Heart right ventricle (tissue), 16 donors: ENCODE measurements at regions of chr6 and their contacts with region 1.

Region 1: DNA sequence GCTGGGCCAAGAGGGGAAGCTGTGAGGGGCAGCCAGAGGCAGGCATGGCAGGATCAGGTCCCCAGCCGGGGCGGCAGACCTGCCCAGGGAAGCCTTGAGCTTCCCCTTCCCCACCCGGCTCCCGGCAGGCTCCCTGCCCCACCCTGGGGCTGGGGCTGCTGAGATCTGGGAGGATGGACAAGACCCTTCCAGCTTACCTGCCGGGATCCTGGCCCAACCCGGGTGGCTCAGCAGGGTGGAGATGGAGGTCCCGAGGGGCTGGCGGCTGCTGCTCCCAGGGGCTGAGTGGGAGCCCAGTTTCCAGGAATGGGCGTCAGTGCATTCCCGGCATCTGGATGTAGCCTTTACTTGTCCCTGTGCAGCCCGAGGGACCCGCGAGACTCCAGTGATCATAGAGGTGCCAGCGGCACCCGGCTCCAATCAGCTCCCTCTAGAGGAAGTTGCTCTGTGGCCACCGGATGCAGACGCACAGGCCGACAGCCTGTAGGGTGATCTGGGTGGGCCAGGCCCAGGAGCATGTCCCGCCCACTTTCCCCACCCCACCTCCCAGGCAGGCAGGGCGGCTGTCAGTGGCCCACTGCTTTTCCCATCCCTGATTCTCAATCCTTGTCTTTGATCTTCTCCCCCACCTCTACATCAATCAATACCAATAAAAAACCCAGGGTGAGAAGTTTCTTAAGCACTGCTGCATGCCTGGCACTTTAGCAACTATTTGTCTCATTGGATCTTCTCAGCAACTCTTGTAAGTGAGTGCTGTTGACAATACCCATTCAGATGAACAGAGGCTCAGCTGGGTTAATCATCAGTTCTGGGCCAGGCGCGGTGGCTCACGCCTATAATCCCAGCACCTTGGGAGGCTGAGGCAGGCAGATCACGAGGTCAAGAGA is at the start of gene BAK1:
- DNase-seq: peak; percentile 90 to 92
- ATAC-seq: peak; percentile 92 to 97 (median 95)
- H3K4me3 ChIP-seq: peak within 1 kb of the TSS; percentile 50 to 95 (median 90)
- H3K27ac ChIP-seq: peak within 1 kb of the TSS; percentile 54 to 94 (median 90)
- H3K4me1 ChIP-seq: peaks cover 18 to 39% (median 33%) of the 10 kb centered on the region in 9 donors
- H3K27me3 ChIP-seq: no peaks in the 10 kb centered on the region
- CTCF ChIP-seq: peak; percentile 30 to 75 (median 61)
- total RNA-seq, gene BAK1: 16.0 to 26.4 (median 18.7) TPM

Region 2: DNA sequence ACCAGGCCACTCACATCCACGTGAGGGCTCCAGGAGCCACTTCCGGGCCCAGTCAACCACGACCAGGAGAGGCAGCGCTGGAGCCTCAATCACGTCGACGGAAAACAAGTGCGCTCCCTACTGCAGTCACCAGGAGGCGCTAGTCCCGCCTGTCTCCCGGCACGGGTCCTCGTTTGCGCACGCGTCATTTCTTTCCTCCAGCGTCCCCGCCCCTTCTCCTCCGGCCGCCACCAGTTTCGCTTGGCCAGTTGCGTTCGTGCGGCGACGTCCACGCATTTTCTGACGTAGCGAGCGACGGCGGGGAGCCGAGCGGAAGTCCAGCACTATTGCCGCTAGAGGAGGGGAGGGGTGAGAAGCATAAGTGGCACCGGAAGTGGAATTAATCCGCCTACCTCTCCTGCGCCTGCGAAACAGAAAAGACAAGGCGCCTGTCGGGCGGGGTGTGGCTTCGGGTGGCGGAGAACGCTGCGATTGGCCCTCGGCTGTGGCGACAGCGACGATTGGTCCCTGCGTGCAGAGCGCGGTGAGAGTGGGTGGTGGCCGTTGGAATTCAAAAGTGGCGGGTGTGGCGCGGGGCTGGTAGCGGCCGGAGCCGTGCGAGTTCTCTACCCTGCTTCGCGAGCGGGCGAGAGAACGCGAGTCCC is 188.7 kb before region 1 on chr6 and contains the start of gene KIFC1:
- intact Hi-C with region 1: loop called in 1 of 10 experiments (anchors 10 kb)
- DNase-seq: peak; percentile 99
- ATAC-seq: peak; percentile 98 to 99 (median 98)
- H3K4me3 ChIP-seq: peak within 1 kb of the TSS in 9 of 10 donors; percentile 42 to 76 (median 59)
- H3K27ac ChIP-seq: peak within 1 kb of the TSS; percentile 26 to 93 (median 86)
- H3K4me1 ChIP-seq: peaks cover 6 to 41% (median 9%) of the 10 kb centered on the region in 9 donors
- H3K27me3 ChIP-seq: no peaks in the 10 kb centered on the region
- CTCF ChIP-seq: peak; percentile 91 to 100 (median 99)
- total RNA-seq, gene KIFC1: 0.09 to 6.1 (median 0.36) TPM in 8 of 10 donors, not detected in the others

Region 3: DNA sequence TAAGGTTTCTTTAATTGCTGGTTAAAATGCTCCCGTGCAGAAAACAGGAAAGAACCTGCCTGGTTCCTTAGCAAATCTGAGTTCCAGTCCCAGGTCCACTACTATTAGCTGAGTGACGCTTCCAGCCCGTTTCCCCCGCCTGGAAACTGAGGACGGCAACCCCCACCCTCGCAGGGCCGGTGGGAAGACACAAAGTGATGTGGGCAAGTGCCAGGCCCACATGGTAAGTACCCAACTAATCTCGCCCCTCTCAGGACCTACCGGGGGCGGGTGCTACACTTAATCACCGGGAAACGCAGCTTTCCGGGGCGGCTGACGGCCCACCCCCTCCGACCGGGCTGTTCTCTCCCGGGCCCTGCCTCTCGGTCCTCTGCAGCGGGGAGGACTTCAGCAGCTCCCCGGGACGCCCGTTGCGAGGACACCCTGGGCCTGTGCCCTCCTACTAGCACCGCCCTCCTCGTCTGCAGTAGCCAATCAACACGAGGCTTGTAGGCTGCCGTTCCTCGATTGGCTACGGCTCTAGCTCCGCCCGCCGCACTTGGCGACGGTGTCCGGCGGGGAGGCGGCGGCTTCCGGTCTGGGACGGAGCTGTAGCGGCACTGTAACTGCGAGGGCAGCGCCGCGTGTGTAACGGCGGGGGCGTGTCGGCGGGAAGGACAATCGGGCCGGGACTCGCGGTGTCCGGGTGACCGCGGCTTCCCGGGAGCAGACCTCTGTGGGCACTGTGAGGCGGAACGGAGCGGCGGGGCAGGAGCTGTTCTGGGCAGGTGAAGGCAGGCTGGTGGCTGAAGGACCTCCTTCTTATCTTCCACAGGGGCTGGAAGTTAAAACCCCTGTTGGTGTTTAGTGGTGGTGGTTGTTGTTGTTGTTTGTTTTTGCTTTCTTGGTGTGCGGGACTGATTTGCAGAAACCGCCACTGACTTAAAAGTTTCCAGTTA is 125.8 kb before region 1 on chr6 and contains the start of gene ZBTB9:
- intact Hi-C with region 1: loop called in 4 of 10 experiments (anchors 10 kb)
- DNase-seq: peak; percentile 95 to 96
- ATAC-seq: peak; percentile 99 to 100 (median 99)
- H3K4me3 ChIP-seq: peak within 1 kb of the TSS; percentile 61 to 97 (median 81)
- H3K27ac ChIP-seq: peak within 1 kb of the TSS in 9 of 10 donors; percentile 72 to 90 (median 87)
- H3K4me1 ChIP-seq: peaks cover 4 to 42% (median 17%) of the 10 kb centered on the region in 9 donors
- H3K27me3 ChIP-seq: no peaks in the 10 kb centered on the region
- CTCF ChIP-seq: no peak
- total RNA-seq, gene ZBTB9: 2.7 to 6.5 (median 4.9) TPM

Region 4: GRCh38 chr6:33672808-33673207 is 92.7 kb after region 1 on chr6:
- intact Hi-C with region 1: loop called in 4 of 10 experiments (anchors 1 to 10 kb)
- DNase-seq: peak; percentile 81 to 88
- ATAC-seq: peak; percentile 84 to 97 (median 92)
- H3K4me3 ChIP-seq: no peak overlapping the region
- H3K27ac ChIP-seq: no peak overlapping the region
- H3K4me1 ChIP-seq: peaks cover 0 to 14% (median 8%) of the 10 kb centered on the region in 9 donors
- H3K27me3 ChIP-seq: no peaks in the 10 kb centered on the region
- CTCF ChIP-seq: peak; percentile 31 to 79 (median 58)

Region 5: DNA sequence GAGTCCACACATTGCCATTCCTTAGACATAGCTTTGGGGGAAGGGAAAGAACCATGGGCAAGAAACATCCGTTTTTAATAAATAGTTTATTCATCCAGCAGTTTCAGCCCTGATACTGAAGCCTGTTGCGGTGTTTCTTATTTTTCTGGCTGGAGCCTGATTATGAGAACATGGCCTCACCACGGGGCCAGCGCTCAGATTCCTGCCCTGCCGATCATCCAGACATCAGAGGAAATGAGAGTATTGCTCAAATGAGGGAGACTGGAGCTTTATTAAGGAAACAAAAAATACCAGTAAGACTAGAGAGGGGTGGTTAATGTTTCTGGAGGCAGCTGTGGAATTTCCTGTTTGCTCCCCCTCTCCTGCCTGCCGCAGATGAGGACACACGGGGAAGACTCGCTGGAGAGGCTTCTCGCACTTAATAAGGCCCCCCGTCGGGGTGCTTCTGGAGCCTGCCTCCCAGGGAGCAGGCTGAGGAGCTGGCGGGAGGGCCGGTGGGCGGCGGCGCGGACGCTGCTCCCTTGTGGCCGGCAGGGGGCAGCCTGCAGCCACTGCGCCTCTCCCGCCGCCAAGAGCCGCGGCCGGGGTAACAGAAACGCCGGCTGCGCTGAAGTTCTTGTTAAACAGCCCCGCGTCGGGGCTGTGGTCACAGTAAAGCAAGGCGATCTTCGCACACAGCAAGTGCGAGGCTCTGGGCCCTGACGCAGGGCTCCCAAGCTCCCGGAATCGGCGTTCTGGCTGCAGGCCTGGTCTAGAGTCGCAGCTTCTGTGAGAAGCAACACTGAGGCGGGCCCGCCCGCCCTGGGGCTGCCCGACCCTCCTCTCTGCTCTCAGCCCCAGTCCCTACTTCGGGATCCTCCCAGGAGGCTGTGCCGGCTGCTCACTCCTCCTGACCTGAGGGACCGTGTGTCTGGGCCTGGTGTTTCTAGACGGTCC is 191.3 kb after region 1 on chr6:
- intact Hi-C with region 1: loop called in 2 of 10 experiments (anchors 10 kb)
- DNase-seq: peak; percentile 50 to 73
- ATAC-seq: peak; percentile 70 to 89 (median 82)
- H3K4me3 ChIP-seq: peak overlapping the region in 4 of 10 donors; percentile 10 to 38 (median 16)
- H3K27ac ChIP-seq: peak overlapping the region in 9 of 10 donors; percentile 8 to 69 (median 48)
- H3K4me1 ChIP-seq: peaks cover 11 to 42% (median 26%) of the 10 kb centered on the region in 9 donors
- H3K27me3 ChIP-seq: peaks cover 0 to 3% (median 0%) of the 10 kb centered on the region in 7 donors
- CTCF ChIP-seq: peak; percentile 93 to 99 (median 97)

Region 6: DNA sequence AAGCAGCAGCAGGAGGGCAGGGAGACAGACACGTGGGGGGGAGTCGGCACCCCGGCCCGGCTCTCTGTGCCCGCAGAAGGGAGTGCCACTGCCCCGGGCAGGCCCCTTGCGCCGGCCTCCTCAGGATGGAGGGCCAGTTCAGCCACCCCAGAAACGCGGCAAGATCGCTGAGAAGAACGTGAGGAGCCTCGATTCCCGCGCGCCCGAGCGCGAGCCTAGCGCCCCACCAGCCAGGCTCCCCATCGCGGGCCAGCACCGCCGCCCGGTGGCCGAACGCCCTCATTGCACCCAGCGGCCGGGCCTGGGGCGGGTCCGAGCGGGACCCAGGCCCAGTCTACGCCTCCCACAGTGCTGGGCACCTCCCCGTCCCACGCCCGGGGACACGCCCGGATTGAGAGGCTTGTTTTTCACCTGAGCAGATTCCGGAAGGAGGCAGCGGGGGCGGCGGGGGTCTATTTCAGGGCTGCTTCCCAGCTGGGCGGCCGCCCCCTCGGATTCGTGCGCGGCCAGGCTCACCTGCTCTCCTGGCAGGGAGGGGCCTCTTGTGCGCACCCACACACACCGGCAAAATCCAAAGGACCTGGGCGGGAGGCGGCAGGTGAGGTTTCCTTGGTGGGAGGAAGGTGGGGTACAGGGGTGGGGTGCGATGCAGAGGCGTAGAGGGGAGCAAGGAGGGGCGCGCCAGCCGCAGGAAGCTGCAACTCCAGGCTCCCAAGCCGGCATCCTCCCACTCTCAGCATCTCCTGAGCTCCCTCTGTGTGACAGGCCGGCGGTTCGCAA is 574.8 kb after region 1 on chr6:
- intact Hi-C with region 1: loop called in 5 of 10 experiments (anchors 10 kb)
- DNase-seq: peak in 1 of 2 donors; percentile 60
- ATAC-seq: peak; percentile 68 to 84 (median 78)
- H3K4me3 ChIP-seq: peak overlapping the region in 3 of 10 donors; percentile 3 to 31 (median 10)
- H3K27ac ChIP-seq: no peak overlapping the region
- H3K4me1 ChIP-seq: peaks cover 0 to 7% (median 5%) of the 10 kb centered on the region in 9 donors
- H3K27me3 ChIP-seq: peaks cover 0 to 64% (median 63%) of the 10 kb centered on the region in 7 donors
- CTCF ChIP-seq: peak; percentile 92 to 98 (median 95)